ENCODE measurements at regions of chr2 and their contacts with region 1.

Region 1: DNA sequence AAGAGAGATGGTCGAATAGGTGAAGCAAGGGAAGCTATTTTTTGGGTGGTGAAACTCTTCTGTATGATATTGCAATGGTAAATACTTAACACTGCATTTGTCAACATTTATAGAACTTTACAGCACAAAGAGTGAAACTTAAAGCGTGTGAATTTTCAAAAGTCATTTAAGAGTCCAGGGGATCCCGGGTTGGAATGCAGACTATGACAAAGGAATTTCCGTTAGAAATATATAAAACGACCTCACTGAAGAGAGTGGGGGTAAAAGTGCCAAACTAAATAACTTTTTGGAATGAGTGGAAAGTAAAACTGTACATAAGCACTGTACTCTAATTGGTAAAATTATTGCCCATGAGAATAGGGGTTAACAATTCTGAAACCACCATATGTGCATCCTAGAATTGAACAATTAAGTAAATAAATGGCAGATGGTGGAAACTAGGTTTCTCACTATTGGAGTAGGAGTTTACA is 191.0 kb upstream of the FN1 start:
- DNase-seq: no peak

Region 2: DNA sequence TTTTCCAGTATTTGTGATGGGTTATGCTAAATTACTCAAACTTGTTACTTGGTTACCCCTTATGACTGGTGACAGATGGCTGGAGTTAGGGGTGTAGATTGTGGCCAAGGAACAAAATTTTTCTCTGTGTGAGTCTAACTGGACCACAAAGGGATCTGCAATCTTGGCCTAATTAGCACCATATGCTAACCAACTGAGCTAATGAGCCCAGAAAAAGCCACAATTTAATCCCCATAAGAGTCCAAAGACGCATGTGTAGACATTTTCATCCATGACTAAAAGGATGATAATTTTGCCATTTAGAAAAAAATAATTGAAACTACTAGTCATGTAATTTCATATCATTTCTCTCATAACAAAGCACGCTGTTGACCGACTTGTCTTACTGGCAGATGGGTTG is 639.6 kb before region 1 on chr2:
- intact Hi-C with region 1: no loop called
- DNase-seq: no peak

Region 3: DNA sequence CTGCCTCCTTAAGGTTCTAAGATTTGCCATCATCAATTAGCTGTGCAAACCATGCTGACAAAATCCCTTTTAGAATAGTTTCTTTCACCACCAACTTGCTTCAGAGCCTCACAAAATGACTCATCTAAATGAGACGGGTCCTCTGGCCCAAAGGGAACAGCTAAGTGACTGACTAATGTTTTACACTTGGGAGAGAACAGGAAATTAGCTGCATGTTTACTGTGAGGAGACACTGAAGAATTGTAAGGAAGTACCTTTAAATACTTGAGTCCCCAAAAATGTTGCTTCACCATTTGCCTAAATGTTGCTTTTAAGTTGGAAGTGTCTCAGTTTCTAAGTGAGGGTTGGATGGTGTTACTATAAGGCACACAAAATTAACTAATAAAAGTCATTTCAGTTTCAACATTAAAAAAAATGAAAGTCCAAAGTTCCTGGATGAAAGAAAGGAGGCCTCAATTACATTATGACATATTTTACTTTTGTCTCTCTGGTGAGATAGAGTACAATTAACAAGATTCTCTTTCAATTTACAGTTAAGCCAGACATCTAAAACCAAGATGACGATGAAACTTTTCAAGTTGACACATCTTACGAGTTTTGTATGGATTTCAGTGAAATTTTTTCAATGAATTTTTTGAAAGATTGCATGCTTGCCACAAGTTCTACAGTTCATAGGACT is 38.1 kb after region 1 on chr2:
- intact Hi-C with region 1: loop called in 1 of 2 experiments (anchors 5 kb)
- DNase-seq: no peak